Sigmoid colon (tissue), 7 donors: ENCODE measurements at regions of chr9 and their contacts with region 1.

Region 1: GRCh38 chr9:106862825-106863720 is at the start of gene ZNF462:
- DNase-seq: peak; percentile 81
- H3K4me3 ChIP-seq: peak within 1 kb of the TSS; percentile 69 to 74 (median 72)
- H3K27ac ChIP-seq: peak within 1 kb of the TSS; percentile 85 to 91 (median 88)
- H3K4me1 ChIP-seq: peaks cover 0 to 32% (median 21%) of the 10 kb centered on the region in 4 donors
- H3K27me3 ChIP-seq: no peaks in the 10 kb centered on the region
- CTCF ChIP-seq: peak; percentile 19 to 91 (median 78)
- EP300 ChIP-seq: no peak
- POLR2A ChIP-seq: no peak
- total RNA-seq, gene ZNF462: 21.7 to 33.8 (median 25.6) TPM

Region 2: GRCh38 chr9:105901514-105902109 is 961.5 kb before region 1 on chr9:
- intact Hi-C with region 1: loop called (anchors 5 kb)
- DNase-seq: no peak
- H3K4me3 ChIP-seq: no peak overlapping the region
- H3K27ac ChIP-seq: no peak overlapping the region
- H3K4me1 ChIP-seq: no peaks in the 10 kb centered on the region
- H3K27me3 ChIP-seq: no peaks in the 10 kb centered on the region
- CTCF ChIP-seq: peak; percentile 15 to 48 (median 41)
- EP300 ChIP-seq: no peak
- POLR2A ChIP-seq: no peak

Region 3: DNA sequence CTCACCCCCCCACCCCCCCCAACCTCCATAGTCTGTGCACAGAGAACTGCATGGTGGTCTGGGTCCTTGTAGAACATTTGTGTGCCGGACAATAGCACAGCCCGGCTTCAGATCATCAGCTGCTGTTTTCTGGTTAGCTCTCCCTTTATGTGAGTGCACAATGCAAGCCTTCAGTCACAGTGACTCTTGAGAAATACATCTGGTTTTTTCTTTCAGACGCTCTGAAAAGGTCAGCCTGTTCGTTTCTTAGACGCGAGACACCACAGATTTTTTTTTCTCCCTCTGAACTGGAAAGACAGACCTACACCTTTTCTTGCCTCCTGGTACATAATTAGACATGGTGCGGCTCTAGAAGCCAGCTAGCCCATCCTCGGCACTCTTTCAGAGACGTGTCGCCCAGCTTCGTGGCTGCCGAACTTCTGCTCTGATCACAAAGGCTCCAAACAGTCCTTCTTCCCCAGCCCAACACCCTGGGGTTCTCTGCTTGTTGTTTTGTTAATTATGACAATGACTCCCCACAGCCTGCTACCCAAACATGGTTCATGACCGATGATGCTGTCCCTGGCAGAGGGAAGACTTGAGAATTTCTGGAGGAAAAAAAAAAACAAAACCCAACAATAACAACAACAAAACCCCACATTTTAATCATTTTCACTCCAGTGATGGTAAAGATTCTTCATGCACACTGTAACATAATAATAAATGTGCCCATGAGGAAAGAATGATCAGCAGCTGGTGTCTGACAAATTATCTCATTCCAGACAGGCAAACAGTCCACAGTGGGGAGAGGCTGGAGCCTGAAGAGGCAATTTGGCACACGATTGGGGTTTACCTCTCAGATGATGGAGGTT is 241.5 kb before region 1 on chr9:
- intact Hi-C with region 1: loop called (anchors 10 kb)
- DNase-seq: no peak
- H3K4me3 ChIP-seq: no peak overlapping the region
- H3K27ac ChIP-seq: peak overlapping the region; percentile 17 to 45 (median 44)
- H3K4me1 ChIP-seq: peaks cover 0 to 5% (median 2%) of the 10 kb centered on the region in 4 donors
- H3K27me3 ChIP-seq: no peaks in the 10 kb centered on the region
- CTCF ChIP-seq: no peak
- EP300 ChIP-seq: no peak
- POLR2A ChIP-seq: no peak

Region 4: GRCh38 chr9:106816524-106816923 is 46.5 kb before region 1 on chr9:
- intact Hi-C with region 1: no loop called
- DNase-seq: no peak
- H3K4me3 ChIP-seq: no peak overlapping the region
- H3K27ac ChIP-seq: no peak overlapping the region
- H3K4me1 ChIP-seq: no peaks in the 10 kb centered on the region
- H3K27me3 ChIP-seq: no peaks in the 10 kb centered on the region
- CTCF ChIP-seq: no peak
- EP300 ChIP-seq: no peak
- POLR2A ChIP-seq: no peak

Region 5: DNA sequence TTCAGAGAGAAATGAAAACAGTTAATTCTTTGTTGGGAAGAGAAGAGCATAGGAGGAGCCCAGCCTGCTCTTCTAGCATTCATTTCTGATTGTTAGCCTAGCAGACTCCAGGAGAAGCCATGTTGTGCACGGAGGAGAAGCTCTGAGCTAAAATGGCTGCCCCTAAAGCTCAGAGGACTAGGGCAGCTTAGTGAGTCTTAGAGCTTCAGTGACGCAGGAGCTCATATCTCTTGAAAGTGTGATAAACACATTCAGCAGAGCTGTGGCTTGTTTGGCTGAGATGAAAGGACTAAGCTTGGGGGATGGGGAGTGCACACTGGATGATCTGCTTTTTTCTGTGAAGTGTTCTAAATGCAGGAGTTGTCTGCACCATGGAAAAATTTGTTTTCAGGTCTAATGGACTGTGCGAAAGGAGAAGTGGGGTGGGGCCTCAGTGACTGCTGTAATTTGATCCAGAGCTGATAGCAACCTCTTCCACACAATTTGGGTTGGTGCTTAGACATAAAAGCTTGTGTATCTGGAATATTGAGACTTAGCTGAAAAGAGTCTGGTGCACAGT is 58.3 kb after region 1 on chr9:
- intact Hi-C with region 1: loop called (anchors 5 kb)
- DNase-seq: no peak
- H3K4me3 ChIP-seq: no peak overlapping the region
- H3K27ac ChIP-seq: peak overlapping the region; percentile 71 to 80 (median 78)
- H3K4me1 ChIP-seq: peaks cover 0 to 63% (median 46%) of the 10 kb centered on the region in 4 donors
- H3K27me3 ChIP-seq: no peaks in the 10 kb centered on the region
- CTCF ChIP-seq: no peak
- EP300 ChIP-seq: no peak
- POLR2A ChIP-seq: no peak

Region 6: GRCh38 chr9:106994463-106994862 is 131.4 kb after region 1 on chr9:
- intact Hi-C with region 1: loop called (anchors 10 kb)
- DNase-seq: no peak
- H3K4me3 ChIP-seq: no peak overlapping the region
- H3K27ac ChIP-seq: peak overlapping the region in 1 of 4 donors; percentile 10
- H3K4me1 ChIP-seq: peaks cover 0 to 6% (median 0%) of the 10 kb centered on the region in 4 donors
- H3K27me3 ChIP-seq: no peaks in the 10 kb centered on the region
- CTCF ChIP-seq: no peak
- EP300 ChIP-seq: no peak
- POLR2A ChIP-seq: no peak

Region 7: GRCh38 chr9:107172160-107172978 is 309.3 kb after region 1 on chr9:
- intact Hi-C with region 1: loop called (anchors 2 kb)
- DNase-seq: peak; percentile 84
- H3K4me3 ChIP-seq: no peak overlapping the region
- H3K27ac ChIP-seq: no peak overlapping the region
- H3K4me1 ChIP-seq: peaks cover 0 to 25% (median 19%) of the 10 kb centered on the region in 4 donors
- H3K27me3 ChIP-seq: no peaks in the 10 kb centered on the region
- CTCF ChIP-seq: peak; percentile 66 to 91 (median 86)
- EP300 ChIP-seq: no peak
- POLR2A ChIP-seq: no peak